CD8-positive, alpha-beta memory T cell (primary cell): ENCODE measurements at regions of chr10 and their contacts with region 1.

Region 1: GRCh38 chr10:97849687-97850402 is at the start of gene GOLGA7B:
- DNase-seq: peak; percentile 56 to 76 (median 63)
- H3K4me3 ChIP-seq: peak within 1 kb of the TSS; percentile 64
- H3K4me3 Mint-ChIP-seq: peak within 1 kb of the TSS; percentile 84 to 95 (median 90)
- H3K27ac ChIP-seq: no peak within 1 kb of the TSS
- H3K27ac Mint-ChIP-seq: peak within 1 kb of the TSS; percentile 70 to 95 (median 86)
- H3K4me1 ChIP-seq: peaks cover 34% of the 10 kb centered on the region
- H3K4me1 Mint-ChIP-seq: peaks cover 36 to 37% (median 36%) of the 10 kb centered on the region in 3 donors
- H3K27me3 ChIP-seq: no peaks in the 10 kb centered on the region
- H3K27me3 Mint-ChIP-seq: no peaks in the 10 kb centered on the region
- total RNA-seq, gene GOLGA7B: 0.29 to 0.44 TPM

Region 2: DNA sequence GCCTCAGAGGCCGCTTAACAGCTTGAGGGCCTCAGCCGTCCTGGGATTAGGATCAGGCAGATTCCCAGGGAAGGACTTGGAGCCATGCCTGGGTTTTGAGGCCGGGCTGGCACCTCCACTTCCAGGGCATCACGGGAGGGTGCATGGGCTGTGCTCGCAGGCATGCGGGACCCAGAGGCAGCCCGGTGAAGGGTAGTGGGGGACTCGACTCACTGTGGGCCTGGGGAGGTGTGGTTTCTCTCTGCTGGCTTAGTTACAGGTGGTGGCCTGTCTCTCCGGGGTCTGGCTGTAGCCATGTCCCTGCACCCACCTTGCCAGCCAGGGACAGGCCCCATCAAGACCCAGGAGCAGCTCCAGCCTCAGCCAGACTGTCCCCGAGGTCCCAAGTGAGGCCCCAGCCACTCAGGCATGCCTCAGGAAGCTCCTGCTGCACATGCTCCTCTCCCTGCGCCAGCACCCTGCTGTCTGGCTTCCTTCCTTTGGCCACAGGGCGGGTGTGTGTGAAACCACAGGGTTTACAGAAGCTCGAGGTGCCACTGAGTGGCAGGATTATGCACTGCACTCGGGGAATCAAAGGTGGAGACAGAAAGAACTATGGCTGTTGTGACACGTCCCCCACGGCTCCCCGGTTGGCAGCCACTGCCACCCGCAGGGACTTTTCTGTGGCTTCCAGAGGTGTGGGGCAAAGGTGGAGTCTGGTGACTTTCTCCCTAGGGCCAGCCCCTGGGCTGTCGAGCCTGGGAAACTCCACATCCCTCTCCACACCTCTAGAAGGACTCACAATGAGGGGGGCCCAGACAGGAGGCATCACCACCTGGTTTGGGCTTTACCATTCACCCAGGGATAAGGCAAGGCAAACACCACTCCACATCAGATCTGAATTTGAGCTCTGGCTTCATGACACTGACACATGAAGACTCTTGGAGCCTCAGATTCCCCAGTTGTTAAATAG is 19.5 kb after region 1 on chr10:
- CTCF ChIA-PET with region 1: interaction called, 26 read pairs
- POLR2A ChIA-PET with region 1: no interaction called
- DNase-seq: peak; percentile 71 to 90 (median 80)
- H3K4me3 ChIP-seq: peak overlapping the region; percentile 45
- H3K4me3 Mint-ChIP-seq: peak overlapping the region in 6 of 7 donors; percentile 26 to 87 (median 56)
- H3K27ac ChIP-seq: no peak overlapping the region
- H3K27ac Mint-ChIP-seq: peak overlapping the region in 7 of 8 donors; percentile 45 to 95 (median 66)
- H3K4me1 ChIP-seq: peaks cover 17% of the 10 kb centered on the region
- H3K4me1 Mint-ChIP-seq: peaks cover 18 to 21% (median 19%) of the 10 kb centered on the region in 3 donors
- H3K27me3 ChIP-seq: no peaks in the 10 kb centered on the region
- H3K27me3 Mint-ChIP-seq: peaks cover 2 to 11% of the 10 kb centered on the region in 2 donors